PC-3 (cell line): ENCODE measurements at regions of chr6 and their contacts with region 1.

Region 1: DNA sequence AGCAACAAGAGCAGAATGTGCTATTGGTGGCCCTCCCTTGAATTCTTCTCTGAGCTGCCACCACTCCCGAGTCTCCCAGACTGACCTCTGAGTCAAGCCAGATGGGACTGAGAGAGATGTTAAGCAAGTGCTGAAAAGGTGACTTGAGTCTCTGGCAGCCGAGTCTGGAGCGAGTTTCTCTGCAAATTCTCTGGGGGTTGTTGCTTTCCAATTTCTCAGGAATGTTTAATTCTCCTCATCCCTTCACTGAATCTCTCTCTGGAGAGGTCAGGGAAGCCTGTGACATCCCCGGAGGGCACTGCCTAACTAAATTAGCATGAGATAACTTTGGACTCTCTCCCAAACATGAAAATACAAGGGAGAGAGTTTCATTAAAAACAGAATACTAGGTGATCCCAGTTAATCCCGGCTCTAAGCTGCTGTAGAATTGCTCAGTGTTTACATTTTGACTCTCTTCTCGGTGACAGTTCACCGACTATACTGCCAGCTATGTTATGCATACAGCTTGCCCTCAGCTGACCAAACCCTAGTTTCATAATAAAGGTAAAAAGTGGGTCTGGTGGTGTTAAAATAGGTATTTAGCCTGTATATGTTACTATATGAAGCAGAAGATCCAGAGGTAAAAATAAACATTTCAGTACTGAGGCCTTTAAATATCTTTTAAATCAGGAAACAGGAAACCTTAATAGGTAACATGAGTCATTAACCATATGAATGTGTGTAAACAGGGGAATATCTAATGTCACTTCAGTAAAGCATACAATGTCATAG is 158.0 kb downstream of the FOXC1 start:
- DNase-seq: peak; percentile 68
- ATAC-seq: peak; percentile 70
- H3K4me3 ChIP-seq: peak overlapping the region; percentile 52
- H3K27ac ChIP-seq: peak overlapping the region; percentile 85
- H3K4me1 ChIP-seq: peaks cover 63% of the 10 kb centered on the region
- H3K27me3 ChIP-seq: no peaks in the 10 kb centered on the region
- CTCF ChIP-seq: no peak

Region 2: GRCh38 chr6:1686117-1687098 is 81.3 kb before region 1 on chr6:
- CTCF ChIA-PET with region 1: interaction called, 4 read pairs
- POLR2A ChIA-PET with region 1: no interaction called
- intact Hi-C with region 1: loop called (anchors 2 kb)
- DNase-seq: peak; percentile 94
- ATAC-seq: peak; percentile 78
- H3K4me3 ChIP-seq: peak overlapping the region; percentile 34; the same call in 1 of the 2 replicates
- H3K27ac ChIP-seq: peak overlapping the region; percentile 92
- H3K4me1 ChIP-seq: peaks cover 55% of the 10 kb centered on the region
- H3K27me3 ChIP-seq: no peaks in the 10 kb centered on the region
- CTCF ChIP-seq: peak; percentile 74

Region 3: DNA sequence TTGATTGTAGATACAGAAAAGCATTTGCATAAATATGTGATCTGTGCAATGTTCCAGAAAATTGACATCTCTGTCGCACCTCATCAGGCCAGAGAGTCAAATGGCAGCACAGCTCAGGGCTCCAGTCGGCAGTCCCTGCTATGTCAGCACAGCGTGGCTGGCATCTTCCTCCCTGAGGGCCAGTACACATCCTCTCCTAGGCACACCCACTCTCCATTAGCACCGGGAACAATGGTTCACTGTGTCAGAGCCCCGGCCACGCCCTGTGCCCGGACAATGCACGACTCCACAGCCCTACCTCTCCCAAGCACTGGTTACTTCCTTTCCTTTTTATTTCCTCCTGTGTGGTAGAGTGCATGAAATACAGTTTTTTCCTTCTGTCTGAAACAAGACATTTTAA is 43.0 kb before region 1 on chr6:
- CTCF ChIA-PET with region 1: no interaction called
- POLR2A ChIA-PET with region 1: no interaction called
- intact Hi-C with region 1: loop called (anchors 5 kb)
- DNase-seq: peak; percentile 93
- ATAC-seq: peak; percentile 99
- H3K4me3 ChIP-seq: peak overlapping the region; percentile 45
- H3K27ac ChIP-seq: peak overlapping the region; percentile 96
- H3K4me1 ChIP-seq: peaks cover 20% of the 10 kb centered on the region
- H3K27me3 ChIP-seq: no peaks in the 10 kb centered on the region
- CTCF ChIP-seq: no peak

Region 4: DNA sequence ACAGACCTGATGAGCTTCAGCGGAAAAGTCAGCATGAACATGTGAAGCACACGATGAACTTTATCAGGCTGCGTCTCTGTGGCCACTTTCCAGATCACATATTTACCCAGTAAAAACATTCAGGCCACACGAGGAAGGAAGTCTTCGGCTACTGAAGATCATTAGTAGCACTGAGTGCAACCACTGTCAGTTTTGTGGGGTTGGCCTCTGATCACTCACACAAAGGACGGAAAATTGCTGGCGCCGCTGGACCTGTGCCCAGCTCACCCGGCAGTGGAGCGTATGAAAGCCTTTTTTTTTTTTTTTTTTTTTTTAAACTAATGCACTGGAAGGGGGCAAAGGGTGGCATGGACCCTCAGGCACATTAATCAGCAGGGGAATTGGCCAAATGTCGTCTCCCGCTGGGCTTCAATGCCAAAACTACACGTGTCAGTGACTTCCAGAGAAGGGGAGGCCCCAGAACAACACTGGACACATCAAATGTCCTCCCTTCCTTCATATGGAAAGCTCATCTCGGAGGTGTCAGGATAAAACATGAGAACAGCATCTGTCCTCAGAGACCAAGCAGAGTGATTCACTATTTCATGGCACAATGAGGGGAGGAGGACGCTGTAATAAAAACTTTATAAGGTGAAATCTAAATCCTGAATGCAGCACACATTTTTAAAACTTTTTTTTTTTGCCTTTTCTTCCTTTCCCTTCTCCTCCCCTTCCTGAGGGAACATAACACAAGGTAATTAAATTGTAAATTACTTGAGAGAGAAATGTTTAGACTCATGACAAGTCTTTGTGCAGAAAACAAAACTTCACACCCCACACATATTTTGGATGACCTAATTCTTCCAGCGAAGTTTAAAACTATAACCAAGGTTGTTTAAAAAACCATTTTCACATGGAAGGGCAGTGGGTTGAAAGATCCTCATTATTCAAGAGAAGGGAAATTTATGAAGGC is 65.4 kb after region 1 on chr6:
- CTCF ChIA-PET with region 1: no interaction called
- POLR2A ChIA-PET with region 1: no interaction called
- intact Hi-C with region 1: loop called (anchors 5 kb)
- DNase-seq: peak; percentile 72
- ATAC-seq: peak; percentile 95
- H3K4me3 ChIP-seq: no peak overlapping the region
- H3K27ac ChIP-seq: 0 out of 2 replicates have a peak overlapping the region, but pooled peaks have one; percentile 1
- H3K4me1 ChIP-seq: peaks cover 20% of the 10 kb centered on the region
- H3K27me3 ChIP-seq: no peaks in the 10 kb centered on the region
- CTCF ChIP-seq: no peak